Esophagus squamous epithelium (tissue), 5 donors: ENCODE measurements at regions of chr16 and their contacts with region 1.

Region 1: DNA sequence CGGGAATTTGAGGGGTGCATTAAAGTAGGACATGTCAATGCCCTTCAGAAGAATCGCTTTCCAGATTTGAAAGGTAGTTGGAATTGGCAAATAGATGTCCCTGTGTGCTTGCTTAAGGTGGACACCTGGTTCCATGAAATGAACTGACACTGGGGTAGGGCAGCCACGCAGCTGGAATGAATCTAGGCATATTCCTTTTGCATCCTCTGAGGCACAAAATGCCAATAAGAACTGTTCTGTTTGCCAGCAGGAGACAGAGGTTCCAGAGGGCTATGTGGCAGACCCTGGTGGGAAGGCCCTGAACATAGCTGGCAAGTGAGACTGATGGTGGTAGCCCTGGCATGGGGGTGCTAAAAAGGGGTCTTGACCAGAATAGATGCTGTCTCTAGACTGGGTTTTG is 61.5 kb downstream of the SLC6A2 start:
- DNase-seq: no peak
- H3K4me3 ChIP-seq: no peak overlapping the region
- H3K27ac ChIP-seq: no peak overlapping the region
- H3K4me1 ChIP-seq: no peaks in the 10 kb centered on the region
- H3K27me3 ChIP-seq: peaks cover 0 to 10% (median 0%) of the 10 kb centered on the region in 4 donors
- CTCF ChIP-seq: no peak
- POLR2A ChIP-seq: no peak

Region 2: DNA sequence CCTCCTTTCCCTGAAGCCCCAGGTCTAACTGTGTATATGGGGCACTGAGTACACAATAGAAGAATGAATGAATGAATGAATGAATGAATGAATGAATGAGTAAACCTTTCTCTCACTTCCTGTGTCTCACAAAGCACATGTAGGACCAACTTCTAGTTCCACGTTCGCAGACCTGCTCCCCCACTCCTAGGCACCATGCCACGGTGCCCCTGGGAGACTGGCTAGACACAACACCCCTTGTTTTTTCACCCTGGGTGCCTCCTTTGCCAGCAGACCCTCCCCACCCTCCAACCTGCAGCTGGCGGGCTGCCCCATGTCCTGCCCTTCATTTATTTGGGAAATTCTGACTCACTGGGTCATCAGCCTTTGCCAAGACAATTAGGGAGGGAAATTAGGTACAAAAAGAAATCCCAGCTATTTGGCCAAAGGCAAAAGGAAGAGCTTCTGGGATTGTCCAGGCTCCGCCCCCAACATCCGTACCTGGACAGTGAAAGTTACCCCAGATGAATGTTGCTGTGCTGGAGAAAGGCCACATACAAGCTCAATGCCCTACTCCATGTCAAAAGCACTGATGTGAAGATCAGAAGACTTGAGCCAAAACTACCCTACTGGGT is 107.9 kb after region 1 on chr16:
- intact Hi-C with region 1: loop called (anchors 5 kb)
- DNase-seq: no peak
- H3K4me3 ChIP-seq: no peak overlapping the region
- H3K27ac ChIP-seq: no peak overlapping the region
- H3K4me1 ChIP-seq: no peaks in the 10 kb centered on the region
- H3K27me3 ChIP-seq: peaks cover 0 to 31% (median 0%) of the 10 kb centered on the region in 4 donors
- CTCF ChIP-seq: no peak
- POLR2A ChIP-seq: no peak

Region 3: DNA sequence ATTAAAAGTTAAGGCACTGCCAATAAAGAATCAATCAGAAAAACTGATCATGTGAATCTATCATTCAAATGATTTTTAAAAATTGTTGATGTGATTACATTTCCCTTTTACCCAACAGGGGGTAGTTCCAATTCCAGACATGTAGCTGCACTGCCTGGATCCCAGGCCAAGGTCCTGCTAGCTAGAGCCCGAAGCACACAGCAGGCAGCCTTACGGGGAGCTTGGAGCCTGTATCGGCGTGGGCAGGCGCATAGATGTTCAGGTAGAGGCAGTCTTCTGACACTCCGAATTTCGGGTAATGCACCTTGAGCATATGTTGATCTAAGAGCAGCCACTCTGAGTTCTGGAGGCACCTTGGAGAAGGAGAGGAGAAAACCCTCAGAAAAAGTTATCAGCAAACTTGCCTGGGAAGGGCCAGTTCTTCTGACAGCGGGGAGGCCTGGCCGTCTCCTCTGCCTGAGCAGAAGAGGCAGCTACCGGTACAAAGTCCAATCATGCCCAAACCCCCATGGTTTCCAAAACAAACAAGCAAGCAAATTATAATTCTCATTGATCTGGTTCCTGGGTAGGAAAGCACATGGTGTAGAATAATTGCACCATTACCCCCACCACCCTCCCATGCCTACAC is 154.2 kb after region 1 on chr16:
- intact Hi-C with region 1: no loop called
- DNase-seq: no peak
- H3K4me3 ChIP-seq: no peak overlapping the region
- H3K27ac ChIP-seq: no peak overlapping the region
- H3K4me1 ChIP-seq: no peaks in the 10 kb centered on the region
- H3K27me3 ChIP-seq: peaks cover 0 to 15% (median 0%) of the 10 kb centered on the region in 4 donors
- CTCF ChIP-seq: no peak
- POLR2A ChIP-seq: no peak